Caco-2 (cell line): ENCODE measurements at regions of chr12 and their contacts with region 1.

Region 1: DNA sequence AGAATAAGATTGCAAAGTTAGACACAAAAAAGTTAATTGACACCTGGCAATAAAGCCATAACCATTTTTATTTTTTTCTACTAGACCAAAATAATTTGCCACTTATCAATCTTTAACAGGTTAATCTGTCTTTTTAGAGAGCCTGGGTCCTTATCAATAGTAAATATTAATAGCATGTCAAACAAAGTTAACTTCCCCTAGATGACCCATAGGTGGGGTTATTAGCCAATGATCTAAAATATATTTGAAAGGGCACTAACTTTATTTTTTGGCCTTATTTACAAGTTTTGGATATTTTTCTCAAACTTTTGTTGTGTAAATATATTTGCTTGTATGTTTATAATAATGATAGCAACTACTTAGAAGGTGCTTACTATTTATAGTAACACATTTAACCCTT is 3.9 kb downstream of the ANKRD33 start:
- DNase-seq: no peak
- H3K4me3 ChIP-seq: no peak overlapping the region
- H3K4me3 Mint-ChIP-seq: no peak overlapping the region
- H3K27ac Mint-ChIP-seq: no peak overlapping the region
- H3K4me1 ChIP-seq: peaks cover 13% of the 10 kb centered on the region; the same call in 1 of the 2 replicates
- H3K4me1 Mint-ChIP-seq: peaks cover 7% of the 10 kb centered on the region
- H3K27me3 ChIP-seq: no peaks in the 10 kb centered on the region
- H3K27me3 Mint-ChIP-seq: no peaks in the 10 kb centered on the region
- CTCF ChIP-seq: peak; percentile 54 to 56

Region 2: GRCh38 chr12:51863933-51864832 is 27.7 kb before region 1 on chr12:
- CTCF ChIA-PET with region 1: interaction called, 11 read pairs
- POLR2A ChIA-PET with region 1: no interaction called
- intact Hi-C with region 1: no loop called
- DNase-seq: peak; percentile 88 to 91
- H3K4me3 ChIP-seq: peak overlapping the region; percentile 50
- H3K4me3 Mint-ChIP-seq: peak overlapping the region; percentile 68
- H3K27ac Mint-ChIP-seq: peak overlapping the region; percentile 75
- H3K4me1 ChIP-seq: peaks cover 36% of the 10 kb centered on the region
- H3K4me1 Mint-ChIP-seq: peaks cover 22% of the 10 kb centered on the region
- H3K27me3 ChIP-seq: no peaks in the 10 kb centered on the region
- H3K27me3 Mint-ChIP-seq: no peaks in the 10 kb centered on the region
- CTCF ChIP-seq: no peak

Region 3: GRCh38 chr12:51926718-51927117 is 34.9 kb after region 1 on chr12:
- CTCF ChIA-PET with region 1: interaction called, 5 read pairs
- POLR2A ChIA-PET with region 1: no interaction called
- intact Hi-C with region 1: loop called (anchors 1 kb)
- DNase-seq: peak; percentile 69 to 70
- H3K4me3 ChIP-seq: no peak overlapping the region
- H3K4me3 Mint-ChIP-seq: no peak overlapping the region
- H3K27ac Mint-ChIP-seq: no peak overlapping the region
- H3K4me1 ChIP-seq: peaks cover 30% of the 10 kb centered on the region
- H3K4me1 Mint-ChIP-seq: peaks cover 26% of the 10 kb centered on the region
- H3K27me3 ChIP-seq: no peaks in the 10 kb centered on the region
- H3K27me3 Mint-ChIP-seq: no peaks in the 10 kb centered on the region
- CTCF ChIP-seq: peak; percentile 64 to 70

Region 4: GRCh38 chr12:51951199-51951842 is 59.5 kb after region 1 on chr12 and contains the start of gene ACVR1B:
- CTCF ChIA-PET with region 1: no interaction called
- POLR2A ChIA-PET with region 1: no interaction called
- intact Hi-C with region 1: loop called (anchors 2 kb)
- DNase-seq: peak; percentile 93 to 94
- H3K4me3 ChIP-seq: peak within 1 kb of the TSS; percentile 72
- H3K4me3 Mint-ChIP-seq: peak within 1 kb of the TSS; percentile 87
- H3K27ac Mint-ChIP-seq: peak within 1 kb of the TSS; percentile 78
- H3K4me1 ChIP-seq: peaks cover 28% of the 10 kb centered on the region
- H3K4me1 Mint-ChIP-seq: peaks cover 33% of the 10 kb centered on the region
- H3K27me3 ChIP-seq: no peaks in the 10 kb centered on the region
- H3K27me3 Mint-ChIP-seq: no peaks in the 10 kb centered on the region
- CTCF ChIP-seq: no peak
- total RNA-seq, gene ACVR1B: 92.7 and 112 TPM in 2 replicates